ENCODE measurements at regions of chr5 and their contacts with region 1.

Region 1: DNA sequence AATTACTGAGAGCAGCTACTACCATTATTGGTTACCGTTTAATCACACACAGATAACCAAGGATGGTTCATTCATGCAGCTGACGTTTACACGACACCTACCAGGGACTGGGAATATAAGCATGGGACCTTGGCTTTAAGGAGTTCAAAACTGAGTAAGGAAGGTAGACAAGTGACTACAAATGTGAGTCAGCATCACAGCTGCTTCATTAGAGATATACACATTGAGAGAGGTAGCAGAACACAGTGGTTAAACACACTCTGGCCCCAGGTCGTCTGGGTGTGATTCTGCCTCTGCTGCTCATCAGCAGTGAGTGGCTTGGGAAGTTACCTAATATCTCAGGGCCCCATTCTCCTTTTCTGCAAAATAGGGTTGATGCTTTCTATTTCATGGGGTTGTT is 268.6 kb downstream of the NR3C1 start:
- DNase-seq: no peak
- ATAC-seq: no peak

Region 2: DNA sequence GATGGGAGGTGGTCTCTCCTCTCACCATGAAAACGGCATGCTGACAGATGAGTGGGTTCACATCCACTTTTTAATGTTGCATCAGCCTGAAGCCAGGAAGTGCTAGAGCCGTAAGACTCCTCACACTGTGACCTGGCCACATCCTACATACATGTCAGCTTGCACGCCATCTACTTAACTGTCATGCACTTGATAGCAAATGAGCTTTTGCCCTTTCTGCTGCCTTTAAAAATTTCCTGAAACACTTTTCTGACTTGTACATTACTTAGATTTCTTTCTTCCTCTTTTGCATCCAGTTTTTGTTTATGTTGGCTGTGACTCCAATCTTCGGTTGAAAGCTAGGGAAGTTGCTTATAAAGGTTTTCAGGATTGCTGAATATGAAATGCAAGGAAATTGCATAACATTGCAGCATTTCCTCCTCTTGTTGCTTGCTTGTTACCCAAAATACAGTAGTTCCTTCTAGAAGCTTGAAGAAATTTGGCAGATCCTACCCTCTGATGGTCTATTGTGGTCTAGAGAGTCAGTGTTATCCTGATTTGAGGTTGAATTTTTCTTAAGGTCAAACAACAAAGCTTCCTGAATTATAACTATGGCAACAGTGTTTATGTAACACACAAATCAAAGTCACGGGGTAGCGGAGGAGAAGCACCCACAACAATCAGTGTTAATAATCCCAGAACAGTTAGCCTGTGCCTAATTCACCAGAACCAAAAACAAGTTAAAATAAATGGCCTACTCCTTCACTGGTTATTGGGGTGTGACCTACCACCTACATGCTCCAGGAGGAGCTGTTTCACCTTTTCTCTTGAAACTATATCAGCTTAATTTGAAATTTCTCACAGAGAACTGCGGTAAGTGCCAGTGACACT is 132.2 kb before region 1 on chr5:
- intact Hi-C with region 1: loop called (anchors 5 kb)
- DNase-seq: no peak
- ATAC-seq: peak; percentile 74

Region 3: GRCh38 chr5:143023411-143024096 is 111.3 kb before region 1 on chr5:
- intact Hi-C with region 1: loop called (anchors 5 kb)
- DNase-seq: peak; percentile 80
- ATAC-seq: peak; percentile 94

Region 4: DNA sequence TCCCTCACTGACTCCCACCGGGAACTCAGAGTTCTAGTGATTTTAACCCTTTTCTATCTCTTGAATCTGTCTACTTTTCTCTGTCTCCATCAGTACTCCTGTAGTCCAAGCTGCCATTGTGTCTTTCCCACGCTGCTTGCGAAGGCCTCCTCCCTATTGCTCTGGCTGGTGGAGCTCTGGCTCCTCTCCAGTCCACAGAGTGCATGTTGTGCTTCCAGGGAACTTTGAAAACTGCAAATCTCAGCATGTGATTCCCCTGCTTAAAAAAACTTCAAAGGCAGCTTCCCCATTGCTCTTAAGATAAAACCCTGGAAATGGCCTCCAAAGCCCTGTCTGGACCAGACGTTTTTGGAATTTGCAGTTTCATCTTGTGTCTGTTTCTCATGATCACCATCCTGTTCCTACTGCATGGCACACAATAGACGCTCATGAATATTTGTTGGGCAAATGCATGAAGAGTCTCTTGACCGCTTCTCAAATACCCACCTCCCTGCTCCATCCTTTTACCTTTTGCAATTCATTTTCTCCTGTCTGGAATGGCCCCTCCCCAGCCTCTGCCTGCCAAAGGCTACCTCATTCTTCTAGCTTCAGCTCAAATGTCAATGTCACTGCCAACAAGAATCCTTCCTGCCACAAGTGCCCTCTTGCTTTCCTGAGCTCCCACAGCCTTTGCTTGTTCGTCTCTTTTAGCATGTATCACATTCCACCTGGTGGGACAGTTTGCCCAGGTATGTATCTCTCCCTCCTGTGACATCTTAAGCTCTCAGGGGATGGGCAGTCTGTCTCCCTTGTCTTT is 71.5 kb before region 1 on chr5:
- intact Hi-C with region 1: loop called (anchors 5 kb)
- DNase-seq: peak; percentile 91
- ATAC-seq: peak; percentile 86

Region 5: GRCh38 chr5:143200781-143201398 is 66.0 kb after region 1 on chr5:
- intact Hi-C with region 1: loop called (anchors 2 kb)
- DNase-seq: no peak
- ATAC-seq: peak; percentile 97